Posterior cingulate gyrus (tissue), 11 donors: ENCODE measurements at regions of chr14 and their contacts with region 1.

Region 1: GRCh38 chr14:49867831-49868723 is 15.5 kb upstream of the NEMF start:
- DNase-seq: peak; percentile 87 to 98 (median 94)

Region 2: GRCh38 chr14:49892636-49893308 is 24.7 kb after region 1 on chr14 and contains the start of gene ARF6:
- intact Hi-C with region 1: loop called (anchors 1 kb)
- DNase-seq: peak; percentile 96 to 99 (median 98)

Region 3: DNA sequence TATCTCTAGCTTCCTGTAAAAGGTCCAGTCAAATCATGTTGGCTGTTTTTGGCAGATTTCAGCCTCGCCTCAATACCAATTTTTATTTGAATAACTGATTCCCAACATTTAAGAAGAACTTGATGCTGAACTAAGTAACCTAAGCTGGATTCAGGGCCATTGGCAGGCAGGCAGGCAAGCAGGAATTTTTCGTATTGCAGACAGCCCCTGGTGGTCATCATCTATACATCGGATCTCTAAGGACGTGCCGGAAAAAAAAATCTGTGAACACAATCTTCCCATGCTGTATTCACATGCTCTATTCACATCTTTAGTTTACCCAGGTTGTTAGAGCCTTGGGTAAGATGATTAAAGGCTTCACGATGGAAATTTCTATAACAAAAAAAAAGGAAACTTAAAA is 241.3 kb after region 1 on chr14:
- intact Hi-C with region 1: loop called (anchors 5 kb)
- DNase-seq: no peak

Region 4: DNA sequence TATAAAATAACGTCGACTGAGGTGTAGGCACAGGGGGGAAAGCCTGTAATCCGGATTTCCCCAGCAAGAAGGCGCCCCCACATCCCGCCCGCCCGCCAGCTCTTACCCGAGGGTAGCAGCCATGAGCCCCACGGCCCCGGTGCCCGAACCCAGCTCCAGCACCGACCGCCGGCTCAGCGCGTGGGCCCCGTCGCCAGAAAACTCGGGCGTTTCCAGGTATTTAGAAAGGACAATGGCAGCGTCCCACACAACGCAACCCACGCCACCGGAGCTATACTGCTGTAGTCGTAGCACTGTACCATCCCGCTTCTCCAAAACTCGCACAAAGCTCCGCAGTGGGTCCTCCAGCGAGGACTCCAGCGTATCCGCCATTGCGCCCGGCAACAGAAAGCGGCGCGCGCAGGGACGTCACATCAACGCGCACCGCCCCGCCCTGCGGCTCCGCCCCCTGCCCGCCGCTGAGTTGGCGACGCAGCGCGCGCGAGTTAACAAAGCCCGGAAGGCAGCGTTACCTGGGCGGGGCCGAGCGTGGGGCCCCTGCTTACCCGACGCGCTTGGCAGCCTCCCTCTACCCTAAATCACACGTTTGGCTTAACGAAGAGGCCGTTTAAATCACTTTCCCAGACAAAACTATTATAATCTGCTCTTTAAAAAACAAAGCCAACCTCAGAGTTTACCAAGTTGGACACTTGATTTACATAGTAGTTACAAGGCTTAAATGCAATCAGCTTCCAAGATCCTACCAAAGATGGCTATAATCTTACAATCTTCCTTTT is 248.3 kb after region 1 on chr14 and contains the start of gene VCPKMT:
- intact Hi-C with region 1: loop called (anchors 2 kb)
- DNase-seq: peak; percentile 84 to 99 (median 90)